Activated B cell treated with CpG ODN at 0.5 μM for 24 hours (primary cell): ENCODE measurements at regions of chr17 and their contacts with region 1.

Region 1: DNA sequence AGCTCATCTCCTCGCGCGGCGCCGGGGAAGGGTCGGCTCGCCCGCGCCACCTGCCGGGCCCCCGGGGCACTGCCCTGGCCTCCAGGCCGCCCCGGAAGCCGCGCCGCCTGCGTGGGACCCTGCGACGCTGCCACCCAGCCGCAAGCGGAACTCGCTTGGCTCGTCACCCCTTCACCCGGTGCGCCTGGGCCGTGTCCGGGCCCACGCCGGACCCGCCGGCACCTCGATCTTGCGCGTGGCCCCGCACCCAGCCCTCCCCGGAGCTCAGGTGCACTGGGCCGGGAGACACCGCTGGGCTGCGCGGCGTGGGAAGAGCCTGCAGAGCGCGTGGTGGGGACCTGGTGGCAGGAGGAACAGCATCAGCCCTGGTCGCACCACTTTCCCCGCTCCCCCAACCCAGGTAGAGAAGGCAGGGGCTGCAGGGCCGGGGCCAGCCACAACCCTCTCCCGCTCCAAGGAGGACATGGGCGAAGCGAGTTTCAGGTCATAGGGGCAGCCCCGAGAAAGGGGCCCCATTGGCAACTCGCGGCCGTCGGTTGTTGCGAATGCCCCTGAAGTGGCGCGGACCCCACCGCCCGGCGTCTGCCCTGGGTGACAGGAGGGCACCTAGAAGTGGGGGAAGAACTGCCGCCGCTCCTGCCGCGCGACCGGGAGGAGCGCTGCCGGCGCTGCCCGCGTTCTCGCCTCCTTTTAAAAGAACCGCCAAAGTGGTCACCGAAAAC is 363 bp upstream of the MIF4GD start:
- DNase-seq: peak; percentile 95
- ATAC-seq: peak; percentile 91
- H3K4me3 Mint-ChIP-seq: peak overlapping the region; percentile 82
- H3K27ac Mint-ChIP-seq: peak overlapping the region; percentile 76
- H3K4me1 Mint-ChIP-seq: peaks cover 20% of the 10 kb centered on the region
- H3K27me3 Mint-ChIP-seq: no peaks in the 10 kb centered on the region
- CTCF ChIP-seq: no peak

Region 2: DNA sequence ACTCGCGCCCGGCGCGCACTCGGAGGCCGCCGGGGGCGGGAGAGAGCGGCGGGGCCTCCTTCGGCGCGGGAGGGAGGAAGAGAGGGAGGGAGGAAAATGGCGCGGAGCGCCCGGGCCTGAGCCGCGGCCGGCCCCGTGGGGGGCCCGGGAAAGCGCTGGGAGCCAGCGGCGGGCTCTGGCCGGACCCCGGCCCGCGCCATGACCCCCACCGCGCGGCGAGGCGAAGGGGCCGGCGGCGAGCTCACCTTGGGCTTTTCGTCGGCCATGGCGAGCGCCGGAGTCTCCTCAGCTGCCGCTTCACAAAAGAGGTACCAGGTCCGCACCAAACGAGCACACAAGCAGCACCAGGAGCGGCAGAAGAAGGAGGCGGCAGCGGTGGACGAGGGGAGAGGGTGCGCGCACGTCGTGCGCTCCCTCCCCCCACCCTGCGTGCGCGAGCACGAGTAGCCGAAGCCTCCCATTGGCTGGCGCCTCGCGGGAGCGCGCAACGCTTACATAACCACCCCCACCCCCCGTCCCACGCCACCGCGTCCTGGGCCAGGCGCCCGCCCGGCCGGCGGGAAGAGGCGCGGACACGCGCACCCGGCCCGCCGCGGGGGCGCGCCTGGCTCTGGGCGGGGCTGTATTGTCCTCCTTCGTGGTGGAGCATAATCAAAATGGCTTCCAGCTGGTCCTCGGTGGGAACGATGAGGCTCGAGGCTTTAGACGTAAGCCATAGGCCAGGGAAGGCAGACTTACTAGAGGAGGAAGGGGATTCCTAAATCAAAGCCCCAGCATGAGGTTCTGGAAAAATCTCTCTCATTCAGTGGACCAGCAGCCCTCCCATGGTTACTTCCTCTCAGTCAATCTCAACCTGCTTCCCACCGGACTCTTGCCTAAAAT is 88.6 kb before region 1 on chr17 and contains the start of gene SUMO2:
- CTCF ChIA-PET with region 1: no interaction called
- POLR2A ChIA-PET with region 1: interaction called, 4 read pairs
- intact Hi-C with region 1: loop called (anchors 1 kb)
- DNase-seq: peak; percentile 96
- ATAC-seq: peak; percentile 82
- H3K4me3 Mint-ChIP-seq: peak within 1 kb of the TSS; percentile 86
- H3K27ac Mint-ChIP-seq: peak within 1 kb of the TSS; percentile 97
- H3K4me1 Mint-ChIP-seq: peaks cover 38% of the 10 kb centered on the region
- H3K27me3 Mint-ChIP-seq: no peaks in the 10 kb centered on the region
- CTCF ChIP-seq: no peak
- total RNA-seq, gene SUMO2: 365 and 394 TPM in 2 replicates

Region 3: GRCh38 chr17:75244133-75244866 is 27.1 kb before region 1 on chr17:
- CTCF ChIA-PET with region 1: interaction called, 24 read pairs
- POLR2A ChIA-PET with region 1: interaction called, 24 read pairs
- intact Hi-C with region 1: loop called (anchors 5 kb)
- DNase-seq: peak; percentile 31
- ATAC-seq: peak; percentile 75
- H3K4me3 Mint-ChIP-seq: peak overlapping the region; percentile 57
- H3K27ac Mint-ChIP-seq: peak overlapping the region; percentile 87
- H3K4me1 Mint-ChIP-seq: peaks cover 55% of the 10 kb centered on the region
- H3K27me3 Mint-ChIP-seq: no peaks in the 10 kb centered on the region
- CTCF ChIP-seq: no peak

Region 4: DNA sequence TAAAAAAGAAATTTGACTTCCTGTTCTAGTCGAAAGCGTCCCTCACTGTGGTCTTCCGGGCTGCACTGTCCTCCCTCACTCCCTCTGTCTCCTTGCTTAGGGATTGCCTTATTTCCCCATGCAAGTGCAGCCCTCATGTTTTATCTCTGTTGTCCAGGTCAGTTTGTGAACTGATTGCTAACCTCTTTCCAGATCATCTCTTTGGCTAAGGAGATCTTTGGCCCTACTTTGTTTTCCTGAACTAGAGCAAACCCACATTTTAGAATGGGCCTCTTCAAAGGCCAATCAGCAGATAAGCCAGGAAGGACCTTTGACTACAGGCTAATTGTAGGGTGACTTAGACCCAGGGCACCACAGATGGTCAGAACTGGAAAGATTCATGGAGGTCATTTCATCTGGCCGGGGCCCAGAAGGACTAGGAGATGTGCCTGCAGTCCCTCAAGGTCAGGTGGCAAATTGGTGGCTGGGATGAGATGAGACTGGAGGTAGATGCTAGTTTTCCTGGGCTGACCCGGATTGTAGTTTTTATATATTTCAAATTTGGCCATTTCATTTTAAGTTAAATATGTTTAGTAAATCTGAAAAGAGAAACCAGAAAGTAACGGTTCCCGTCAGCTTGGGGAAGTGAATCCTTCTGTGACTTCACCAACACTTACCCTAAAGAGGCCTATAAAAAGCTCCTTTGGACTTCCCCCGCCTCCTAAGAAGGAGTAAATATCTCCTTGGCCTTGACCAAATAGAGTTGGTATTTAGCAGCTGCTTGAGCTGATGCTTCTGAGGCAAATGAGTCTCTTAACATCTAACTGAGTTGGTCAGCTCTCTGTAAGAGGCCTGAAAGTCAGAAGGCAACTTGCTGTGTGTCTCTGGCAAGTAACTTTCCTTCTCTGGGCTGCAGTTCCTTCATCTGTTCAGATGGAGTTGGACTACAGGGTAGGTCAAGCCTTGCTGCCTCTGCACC is 24.1 kb after region 1 on chr17:
- CTCF ChIA-PET with region 1: interaction called, 38 read pairs
- POLR2A ChIA-PET with region 1: interaction called, 97 read pairs
- intact Hi-C with region 1: no loop called
- DNase-seq: peak; percentile 46
- ATAC-seq: peak; percentile 64
- H3K4me3 Mint-ChIP-seq: peak overlapping the region; percentile 76
- H3K27ac Mint-ChIP-seq: peak overlapping the region; percentile 100
- H3K4me1 Mint-ChIP-seq: peaks cover 77% of the 10 kb centered on the region
- H3K27me3 Mint-ChIP-seq: no peaks in the 10 kb centered on the region
- CTCF ChIP-seq: no peak

Region 5: DNA sequence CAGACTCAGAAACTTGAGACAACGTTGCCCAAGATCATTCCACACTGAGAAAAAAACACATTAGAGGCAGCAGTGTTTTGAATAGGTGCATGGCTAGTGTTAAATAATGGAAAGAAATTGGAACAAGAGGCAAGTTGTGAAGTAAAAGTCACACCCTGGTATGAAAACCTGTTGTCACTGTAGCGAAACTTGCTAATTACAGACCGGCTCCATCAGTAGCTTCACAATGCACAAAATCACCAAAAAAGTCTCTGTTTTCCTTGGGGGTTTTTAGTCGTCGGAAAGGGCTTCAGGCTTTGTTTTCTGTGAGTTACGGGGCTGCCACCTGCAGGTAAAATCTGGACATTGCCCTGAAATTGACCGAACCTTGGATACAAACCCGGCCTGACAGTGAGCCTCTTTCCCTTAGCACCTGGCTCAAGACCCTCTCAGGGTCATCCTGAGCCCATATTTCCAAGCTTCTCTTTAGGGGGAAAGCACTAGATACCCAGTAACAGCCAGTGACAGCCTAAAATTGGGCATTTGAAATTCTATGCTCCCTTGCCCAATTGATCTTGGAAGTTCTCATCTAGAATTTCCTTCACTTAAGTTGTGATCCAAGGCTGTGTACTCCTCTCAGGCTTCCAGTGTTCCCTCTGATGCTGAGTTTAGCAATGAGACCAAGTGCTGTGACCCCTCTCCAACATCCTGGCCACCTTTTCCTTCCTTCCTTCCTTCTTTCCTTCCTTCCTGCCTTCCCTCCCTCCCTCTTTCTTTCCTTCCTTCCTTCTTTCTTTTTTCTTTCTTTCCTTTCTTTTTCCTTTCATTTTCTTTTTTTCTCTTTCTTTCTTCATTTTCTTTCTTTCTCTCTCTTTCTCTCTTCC is 141.3 kb after region 1 on chr17:
- CTCF ChIA-PET with region 1: interaction called, 18 read pairs
- POLR2A ChIA-PET with region 1: interaction called, 17 read pairs
- intact Hi-C with region 1: loop called (anchors 1 kb)
- DNase-seq: peak; percentile 63
- ATAC-seq: peak; percentile 94
- H3K4me3 Mint-ChIP-seq: peak overlapping the region; percentile 53
- H3K27ac Mint-ChIP-seq: peak overlapping the region; percentile 63
- H3K4me1 Mint-ChIP-seq: peaks cover 12% of the 10 kb centered on the region
- H3K27me3 Mint-ChIP-seq: no peaks in the 10 kb centered on the region
- CTCF ChIP-seq: peak; percentile 9

Region 6: GRCh38 chr17:75515496-75516254 is 244.3 kb after region 1 on chr17 and contains the start of gene CASKIN2:
- CTCF ChIA-PET with region 1: interaction called, 3 read pairs
- POLR2A ChIA-PET with region 1: interaction called, 4 read pairs
- intact Hi-C with region 1: loop called (anchors 5 kb)
- DNase-seq: peak; percentile 80
- ATAC-seq: peak; percentile 68
- H3K4me3 Mint-ChIP-seq: peak within 1 kb of the TSS; percentile 82
- H3K27ac Mint-ChIP-seq: no peak within 1 kb of the TSS
- H3K4me1 Mint-ChIP-seq: peaks cover 22% of the 10 kb centered on the region
- H3K27me3 Mint-ChIP-seq: no peaks in the 10 kb centered on the region
- CTCF ChIP-seq: peak; percentile 43
- total RNA-seq, gene CASKIN2: 1.2 and 1.4 TPM in 2 replicates